ENCODE measurements at regions of chr3 and their contacts with region 1.

Region 1: DNA sequence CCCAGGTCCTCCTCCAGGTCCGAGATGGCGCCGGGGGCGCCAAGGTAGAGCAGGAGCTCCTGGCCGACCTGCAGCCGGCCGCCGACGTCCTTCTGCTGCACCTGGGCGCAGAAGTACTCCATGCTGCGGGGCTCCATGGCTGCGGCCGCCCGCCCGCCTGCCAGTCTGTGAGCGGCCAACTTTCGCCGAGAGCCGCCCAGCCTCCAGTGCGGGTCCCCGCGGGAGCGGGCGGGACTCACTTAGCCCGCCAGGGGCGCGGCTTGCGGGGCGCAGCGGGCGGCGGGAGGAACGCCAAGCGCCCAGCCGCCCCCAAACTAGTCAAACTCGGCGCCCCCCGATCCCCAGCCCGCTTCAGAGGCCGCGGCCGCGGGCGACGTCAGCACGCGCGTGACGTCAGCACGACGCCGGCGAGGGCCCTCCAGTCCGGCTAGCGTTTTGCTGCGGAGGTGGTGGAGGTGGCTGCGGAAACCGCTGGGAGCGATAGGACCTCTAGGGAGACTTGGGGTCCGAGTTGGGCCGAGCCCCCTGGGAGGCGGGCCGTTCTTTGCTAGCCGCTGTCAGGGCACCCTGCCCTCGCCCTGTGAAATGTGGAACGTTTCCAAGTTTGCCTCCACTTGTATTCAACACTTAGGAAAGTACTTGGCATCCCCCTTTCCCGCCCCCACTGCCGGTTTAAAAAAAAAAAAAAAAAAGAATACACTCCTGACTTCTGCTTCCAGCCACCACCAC is at the start of gene CLASP2:
- DNase-seq: peak; percentile 77 to 89 (median 86)
- ATAC-seq: peak; percentile 90
- H3K4me3 ChIP-seq: peak within 1 kb of the TSS; percentile 81
- H3K4me3 Mint-ChIP-seq: peak within 1 kb of the TSS in 5 of 10 donors; percentile 89 to 99 (median 97)
- H3K27ac ChIP-seq: peak within 1 kb of the TSS; percentile 91
- H3K27ac Mint-ChIP-seq: peak within 1 kb of the TSS in 7 of 9 donors; percentile 90 to 100 (median 97)
- H3K4me1 ChIP-seq: peaks cover 11 to 17% of the 10 kb centered on the region in 2 donors
- H3K4me1 Mint-ChIP-seq: peaks cover 0 to 17% (median 11%) of the 10 kb centered on the region in 7 donors
- H3K27me3 ChIP-seq: no peaks in the 10 kb centered on the region
- H3K27me3 Mint-ChIP-seq: peaks cover 0 to 10% (median 0%) of the 10 kb centered on the region in 5 donors
- total RNA-seq, gene CLASP2: 44.2 to 83.8 (median 79.2) TPM

Region 2: GRCh38 chr3:33131331-33132018 is 586.6 kb before region 1 on chr3:
- CTCF ChIA-PET with region 1: interaction called, 5 read pairs
- POLR2A ChIA-PET with region 1: no interaction called
- intact Hi-C with region 1: loop called (anchors 1 kb)
- DNase-seq: peak in 6 of 9 donors; percentile 5 to 46 (median 37)
- ATAC-seq: peak; percentile 80
- H3K4me3 ChIP-seq: no peak overlapping the region
- H3K4me3 Mint-ChIP-seq: no peak overlapping the region
- H3K27ac ChIP-seq: no peak overlapping the region
- H3K27ac Mint-ChIP-seq: no peak overlapping the region
- H3K4me1 ChIP-seq: no peaks in the 10 kb centered on the region
- H3K4me1 Mint-ChIP-seq: peaks cover 2 to 12% (median 11%) of the 10 kb centered on the region in 7 donors
- H3K27me3 ChIP-seq: no peaks in the 10 kb centered on the region
- H3K27me3 Mint-ChIP-seq: no peaks in the 10 kb centered on the region

Region 3: DNA sequence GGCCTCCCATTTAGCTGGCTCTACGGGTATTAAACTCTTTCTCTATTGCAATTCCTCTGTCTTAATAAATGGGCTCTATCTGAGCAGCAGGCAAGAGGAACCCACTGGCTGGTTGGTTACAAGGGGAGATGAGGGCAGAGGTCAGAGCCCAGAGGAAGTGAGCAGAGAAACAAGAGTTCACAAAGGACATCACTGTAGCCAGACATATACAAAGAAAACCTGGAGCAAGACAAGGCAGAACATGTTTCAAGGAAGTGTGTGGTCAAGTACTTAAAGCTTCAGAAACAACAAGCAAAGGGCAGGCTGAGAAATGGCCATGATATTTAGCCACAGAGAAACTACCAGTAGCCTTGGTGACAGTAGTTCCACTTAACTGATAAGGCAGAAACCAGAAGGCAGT is 523.7 kb before region 1 on chr3:
- CTCF ChIA-PET with region 1: no interaction called
- POLR2A ChIA-PET with region 1: no interaction called
- intact Hi-C with region 1: no loop called
- DNase-seq: no peak
- ATAC-seq: no peak
- H3K4me3 ChIP-seq: no peak overlapping the region
- H3K4me3 Mint-ChIP-seq: no peak overlapping the region
- H3K27ac ChIP-seq: no peak overlapping the region
- H3K27ac Mint-ChIP-seq: no peak overlapping the region
- H3K4me1 ChIP-seq: no peaks in the 10 kb centered on the region
- H3K4me1 Mint-ChIP-seq: no peaks in the 10 kb centered on the region
- H3K27me3 ChIP-seq: no peaks in the 10 kb centered on the region
- H3K27me3 Mint-ChIP-seq: peaks cover 0 to 5% (median 1%) of the 10 kb centered on the region in 5 donors

Region 4: DNA sequence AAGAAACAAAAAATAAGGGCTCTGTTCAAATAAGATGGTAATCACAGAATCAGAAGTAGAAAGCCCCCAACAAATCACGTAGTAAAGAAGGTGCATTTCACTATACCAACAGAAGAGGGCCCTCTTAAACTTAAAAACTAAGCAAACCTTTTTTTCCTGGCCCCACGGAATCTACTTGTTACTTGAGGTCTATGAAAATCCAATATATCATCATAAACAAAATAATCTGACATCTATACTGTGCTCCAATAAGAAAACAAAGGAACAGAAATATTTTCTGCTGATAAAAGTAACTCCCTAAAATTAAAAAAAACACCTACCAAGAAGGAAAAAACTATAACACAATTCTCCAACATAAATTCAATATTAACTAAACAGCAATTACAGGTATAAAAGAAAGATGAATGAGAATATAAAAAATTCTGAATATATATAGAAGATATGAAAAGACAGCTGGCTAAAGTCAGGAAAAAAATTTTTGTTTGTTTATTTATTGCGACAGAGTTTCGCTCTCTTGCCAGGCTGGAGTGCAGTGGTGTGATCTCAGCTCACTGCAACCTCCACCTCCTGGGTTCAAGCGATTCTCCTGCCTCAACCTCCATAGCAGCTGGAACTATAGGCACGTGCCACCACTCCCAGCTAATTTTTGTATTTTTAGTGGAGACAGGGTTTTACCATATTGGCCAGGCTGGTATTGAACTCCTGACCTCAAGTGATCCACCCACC is 81.7 kb before region 1 on chr3:
- CTCF ChIA-PET with region 1: no interaction called
- POLR2A ChIA-PET with region 1: no interaction called
- intact Hi-C with region 1: loop called (anchors 1 kb)
- DNase-seq: peak in 7 of 9 donors; percentile 16 to 40 (median 30)
- ATAC-seq: peak; percentile 68
- H3K4me3 ChIP-seq: no peak overlapping the region
- H3K4me3 Mint-ChIP-seq: no peak overlapping the region
- H3K27ac ChIP-seq: no peak overlapping the region
- H3K27ac Mint-ChIP-seq: no peak overlapping the region
- H3K4me1 ChIP-seq: no peaks in the 10 kb centered on the region
- H3K4me1 Mint-ChIP-seq: peaks cover 0 to 7% (median 0%) of the 10 kb centered on the region in 7 donors
- H3K27me3 ChIP-seq: no peaks in the 10 kb centered on the region
- H3K27me3 Mint-ChIP-seq: no peaks in the 10 kb centered on the region

Region 5: DNA sequence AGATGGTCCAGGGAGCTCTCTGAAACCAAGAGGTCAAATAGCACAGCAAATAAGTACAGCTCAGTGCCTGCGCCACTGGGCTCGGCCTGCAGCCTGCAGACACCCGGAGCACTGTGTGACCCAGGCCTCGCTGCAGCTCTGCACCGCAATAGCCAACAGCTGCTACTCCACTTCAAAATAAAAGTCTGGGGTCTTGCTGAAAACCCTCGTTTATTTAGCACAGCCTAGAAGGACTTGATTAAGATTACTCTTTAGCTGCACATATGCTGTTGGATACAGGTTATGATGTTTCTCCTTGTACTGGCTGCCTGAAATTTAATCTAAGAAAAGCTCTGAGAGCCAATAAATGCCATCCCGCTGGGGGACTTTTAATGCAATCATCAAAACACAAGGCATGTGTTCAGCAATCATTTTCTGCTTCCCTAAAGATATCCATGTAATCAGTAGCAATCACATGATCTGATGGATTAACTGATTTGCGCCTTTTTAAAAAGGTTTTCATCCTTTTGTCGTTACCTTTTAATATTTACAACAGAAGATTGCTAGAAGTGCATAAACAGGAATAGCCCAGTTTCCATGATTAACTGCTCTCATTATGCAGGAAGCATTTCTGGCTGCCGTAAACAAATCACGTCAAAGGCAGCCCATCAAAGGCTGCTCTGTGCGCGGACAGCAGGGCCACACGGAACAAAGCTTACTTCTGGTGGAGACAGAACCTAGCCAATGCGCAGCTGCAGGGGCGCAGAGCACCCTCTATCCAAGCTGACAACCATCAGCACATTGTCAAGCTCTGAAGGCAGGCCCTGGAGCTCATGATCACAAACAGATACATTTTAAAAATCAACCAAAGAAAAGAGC is 58.8 kb before region 1 on chr3:
- CTCF ChIA-PET with region 1: no interaction called
- POLR2A ChIA-PET with region 1: interaction called, 5 read pairs
- intact Hi-C with region 1: loop called in 1 of 2 experiments (anchors 2 kb)
- DNase-seq: peak in 7 of 9 donors; percentile 27 to 49 (median 36)
- ATAC-seq: peak; percentile 85
- H3K4me3 ChIP-seq: peak overlapping the region; percentile 32
- H3K4me3 Mint-ChIP-seq: peak overlapping the region; percentile 43 to 84 (median 78)
- H3K27ac ChIP-seq: no peak overlapping the region
- H3K27ac Mint-ChIP-seq: peak overlapping the region in 8 of 9 donors; percentile 10 to 87 (median 56)
- H3K4me1 ChIP-seq: peaks cover 0 to 7% of the 10 kb centered on the region in 2 donors
- H3K4me1 Mint-ChIP-seq: peaks cover 17 to 65% (median 48%) of the 10 kb centered on the region in 7 donors
- H3K27me3 ChIP-seq: no peaks in the 10 kb centered on the region
- H3K27me3 Mint-ChIP-seq: no peaks in the 10 kb centered on the region

Region 6: DNA sequence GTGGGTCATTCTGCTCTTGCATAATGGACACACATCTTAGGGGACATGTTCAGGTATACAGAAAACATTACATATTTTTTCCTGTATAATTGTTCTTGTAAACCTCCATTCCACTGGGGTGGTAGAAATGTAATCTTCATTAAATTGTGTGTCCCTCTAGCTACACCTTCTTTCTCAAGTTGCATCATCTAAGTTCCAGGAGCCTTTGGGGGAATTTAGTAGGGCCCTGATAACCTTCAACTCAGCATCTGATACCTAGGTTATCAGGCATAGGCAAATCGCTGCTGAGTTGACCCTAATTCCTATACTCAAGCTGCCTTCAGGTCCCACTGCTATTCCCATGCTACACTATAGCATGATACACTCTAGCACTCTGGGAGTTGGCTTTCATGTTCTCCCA is 19.1 kb after region 1 on chr3:
- CTCF ChIA-PET with region 1: no interaction called
- POLR2A ChIA-PET with region 1: no interaction called
- intact Hi-C with region 1: no loop called
- DNase-seq: no peak
- ATAC-seq: no peak
- H3K4me3 ChIP-seq: no peak overlapping the region
- H3K4me3 Mint-ChIP-seq: no peak overlapping the region
- H3K27ac ChIP-seq: no peak overlapping the region
- H3K27ac Mint-ChIP-seq: no peak overlapping the region
- H3K4me1 ChIP-seq: no peaks in the 10 kb centered on the region
- H3K4me1 Mint-ChIP-seq: no peaks in the 10 kb centered on the region
- H3K27me3 ChIP-seq: no peaks in the 10 kb centered on the region
- H3K27me3 Mint-ChIP-seq: peaks cover 3 to 31% (median 16%) of the 10 kb centered on the region in 5 donors

Region 7: DNA sequence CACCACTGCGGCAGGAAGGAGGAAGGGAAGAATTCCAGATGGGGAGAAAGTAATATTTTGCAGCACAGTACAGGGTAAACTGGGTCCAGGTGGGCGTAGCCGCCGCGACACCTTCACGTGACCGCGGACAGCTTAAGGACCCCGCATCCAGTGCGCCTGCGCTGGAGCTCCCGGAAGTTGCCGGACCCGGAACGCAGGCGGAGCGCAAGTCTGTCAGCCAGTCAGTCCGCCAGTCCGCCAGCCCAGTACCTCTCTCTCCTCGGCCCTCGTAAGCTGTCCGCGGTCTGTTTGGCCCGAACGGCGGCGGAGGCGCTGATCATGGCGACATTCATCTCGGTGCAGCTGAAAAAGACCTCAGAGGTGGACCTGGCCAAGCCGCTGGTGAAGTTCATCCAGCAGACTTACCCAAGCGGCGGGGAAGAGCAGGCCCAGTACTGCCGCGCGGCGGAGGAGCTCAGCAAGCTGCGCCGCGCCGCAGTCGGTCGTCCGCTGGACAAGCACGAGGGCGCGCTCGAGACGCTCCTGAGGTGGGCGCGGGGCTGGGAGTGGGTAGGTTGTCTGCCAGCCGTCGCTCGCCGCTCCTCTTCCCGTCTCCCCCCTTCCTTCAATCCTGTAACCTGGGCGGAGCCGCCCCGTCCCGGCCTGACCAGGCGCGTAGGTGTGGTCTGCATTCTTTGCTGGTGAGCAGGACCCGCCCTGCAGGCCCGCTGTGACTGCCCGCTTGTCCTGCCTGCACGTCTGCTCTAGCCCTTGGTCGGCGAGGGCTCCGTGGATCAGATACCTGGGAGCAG is 80.6 kb after region 1 on chr3 and contains the start of gene PDCD6IP:
- CTCF ChIA-PET with region 1: no interaction called
- POLR2A ChIA-PET with region 1: interaction called, 10 read pairs
- intact Hi-C with region 1: loop called (anchors 1 kb)
- DNase-seq: peak; percentile 80 to 90 (median 86)
- ATAC-seq: peak; percentile 88
- H3K4me3 ChIP-seq: peak within 1 kb of the TSS; percentile 97
- H3K4me3 Mint-ChIP-seq: peak within 1 kb of the TSS; percentile 87 to 100 (median 99)
- H3K27ac ChIP-seq: peak within 1 kb of the TSS; percentile 86
- H3K27ac Mint-ChIP-seq: peak within 1 kb of the TSS; percentile 92 to 100 (median 97)
- H3K4me1 ChIP-seq: peaks cover 21 to 24% of the 10 kb centered on the region in 2 donors
- H3K4me1 Mint-ChIP-seq: peaks cover 40 to 77% (median 67%) of the 10 kb centered on the region in 7 donors
- H3K27me3 ChIP-seq: no peaks in the 10 kb centered on the region
- H3K27me3 Mint-ChIP-seq: peaks cover 0 to 7% (median 0%) of the 10 kb centered on the region in 5 donors
- total RNA-seq, gene PDCD6IP: 139 to 221 (median 202) TPM

Region 8: DNA sequence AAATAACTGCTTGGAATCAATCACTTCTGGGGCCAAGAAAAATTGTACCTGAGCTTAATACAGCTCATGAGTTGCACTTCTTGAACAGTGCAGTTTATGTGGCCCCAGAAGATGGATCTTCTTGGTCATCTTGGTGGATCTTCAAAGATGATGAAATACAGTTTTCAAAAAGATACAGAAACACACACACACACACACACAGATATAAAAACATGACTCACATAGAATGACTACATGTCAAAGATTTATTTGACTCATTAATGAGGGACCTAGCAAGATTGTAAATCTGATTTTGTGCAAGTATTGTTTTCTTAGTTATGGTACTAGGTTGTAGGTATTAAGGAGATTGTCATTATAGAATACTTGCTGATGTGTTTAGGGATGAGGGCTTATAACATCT is 113.0 kb after region 1 on chr3:
- CTCF ChIA-PET with region 1: no interaction called
- POLR2A ChIA-PET with region 1: no interaction called
- intact Hi-C with region 1: no loop called
- DNase-seq: no peak
- ATAC-seq: no peak
- H3K4me3 ChIP-seq: no peak overlapping the region
- H3K4me3 Mint-ChIP-seq: no peak overlapping the region
- H3K27ac ChIP-seq: no peak overlapping the region
- H3K27ac Mint-ChIP-seq: peak overlapping the region in 4 of 9 donors; percentile 1 to 65 (median 47)
- H3K4me1 ChIP-seq: peaks cover 0 to 12% of the 10 kb centered on the region in 2 donors
- H3K4me1 Mint-ChIP-seq: peaks cover 17 to 56% (median 36%) of the 10 kb centered on the region in 7 donors
- H3K27me3 ChIP-seq: no peaks in the 10 kb centered on the region
- H3K27me3 Mint-ChIP-seq: no peaks in the 10 kb centered on the region

Region 9: GRCh38 chr3:34073961-34074360 is 355.9 kb after region 1 on chr3:
- CTCF ChIA-PET with region 1: no interaction called
- POLR2A ChIA-PET with region 1: no interaction called
- intact Hi-C with region 1: no loop called
- DNase-seq: no peak
- ATAC-seq: no peak
- H3K4me3 ChIP-seq: no peak overlapping the region
- H3K4me3 Mint-ChIP-seq: no peak overlapping the region
- H3K27ac ChIP-seq: no peak overlapping the region
- H3K27ac Mint-ChIP-seq: peak overlapping the region in 1 of 9 donors; percentile 47
- H3K4me1 ChIP-seq: no peaks in the 10 kb centered on the region
- H3K4me1 Mint-ChIP-seq: no peaks in the 10 kb centered on the region
- H3K27me3 ChIP-seq: no peaks in the 10 kb centered on the region
- H3K27me3 Mint-ChIP-seq: peaks cover 0 to 8% (median 0%) of the 10 kb centered on the region in 5 donors

Measured in naive thymus-derived CD4-positive, alpha-beta T cell (primary cell).